Ascending aorta (tissue), 2 donors: ENCODE measurements at regions of chr1 and their contacts with region 1.

Region 1: DNA sequence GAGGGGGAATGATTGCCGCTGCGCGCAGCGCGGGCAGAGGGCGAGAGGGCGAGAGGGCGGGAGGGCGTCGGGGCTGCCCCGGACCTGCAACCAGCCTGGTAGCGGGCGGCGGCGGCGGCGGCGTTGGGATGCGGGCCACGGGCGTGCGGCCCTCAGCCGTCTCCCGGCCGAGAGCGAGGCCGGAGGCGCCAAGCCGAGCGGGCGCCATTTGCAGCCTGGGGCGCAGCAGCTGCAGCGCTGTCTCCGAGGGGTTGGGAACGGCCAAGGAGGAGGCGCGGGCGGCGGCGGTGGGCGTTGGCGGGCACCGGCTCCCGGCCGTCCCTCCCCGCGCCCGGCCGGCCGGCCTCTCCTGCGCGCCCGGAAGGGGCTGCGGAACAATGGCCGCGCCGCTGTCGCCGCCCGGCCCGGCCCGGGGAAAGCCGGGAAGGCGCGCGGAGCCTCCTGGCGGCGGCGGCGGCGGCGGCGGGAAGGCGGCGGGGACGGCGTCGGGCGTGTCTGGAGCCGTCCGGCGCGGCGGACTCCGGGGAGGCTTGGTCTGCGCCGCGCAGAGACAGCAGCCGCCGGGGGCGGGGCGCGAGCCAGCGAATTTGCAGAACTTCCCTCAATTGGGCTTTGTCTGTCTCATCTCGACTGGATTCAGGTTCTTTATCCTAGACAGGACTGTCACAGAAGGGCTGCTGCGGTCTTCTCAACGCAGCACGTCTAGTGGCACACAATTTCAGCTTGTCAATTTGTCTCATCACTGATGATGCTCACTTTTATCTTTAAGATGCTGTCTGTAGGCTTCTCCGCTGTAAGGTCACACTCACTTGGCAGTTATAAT is 35.7 kb downstream of the ZBTB8B start:
- DNase-seq: peak in 1 of 2 donors; percentile 79
- H3K4me3 ChIP-seq: peak overlapping the region; percentile 70 to 94
- H3K27ac ChIP-seq: peak overlapping the region; percentile 90 to 93
- H3K4me1 ChIP-seq: peaks cover 0 to 7% of the 10 kb centered on the region in 2 donors
- H3K27me3 ChIP-seq: no peaks in the 10 kb centered on the region
- CTCF ChIP-seq: peak in 1 of 3 experiments; percentile 59

Region 2: DNA sequence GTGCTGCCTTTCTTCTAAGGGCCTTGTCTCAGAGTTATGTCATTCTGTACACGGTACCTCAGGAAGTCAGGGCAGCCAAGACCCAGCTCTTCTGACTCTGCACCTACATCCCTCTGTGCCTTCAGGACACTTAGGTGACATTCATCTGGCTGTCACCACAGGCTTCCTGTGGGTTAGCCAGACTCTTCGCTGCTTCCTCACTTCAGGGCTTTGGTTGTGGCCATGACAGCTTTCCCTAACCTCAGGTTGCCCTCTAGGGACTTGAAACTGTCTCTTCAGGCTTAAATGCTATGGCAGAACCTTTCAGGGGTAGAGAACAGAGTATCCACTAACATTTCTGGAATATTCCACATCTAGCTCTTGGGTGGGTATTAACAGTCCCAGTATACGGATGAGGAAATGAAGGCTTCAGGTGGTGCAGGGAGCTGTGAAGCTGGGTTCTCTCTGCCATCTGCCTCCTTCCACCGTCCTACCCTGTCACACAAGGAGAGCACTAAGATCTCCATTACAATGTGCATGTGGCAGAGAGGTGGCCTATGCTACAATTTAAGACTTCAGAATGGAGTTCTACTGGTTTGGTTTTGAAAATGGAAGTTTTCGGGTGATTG is 128.3 kb before region 1 on chr1:
- intact Hi-C with region 1: no loop called
- DNase-seq: no peak
- H3K4me3 ChIP-seq: no peak overlapping the region
- H3K27ac ChIP-seq: no peak overlapping the region
- H3K4me1 ChIP-seq: no peaks in the 10 kb centered on the region
- H3K27me3 ChIP-seq: no peaks in the 10 kb centered on the region
- CTCF ChIP-seq: no peak

Region 3: GRCh38 chr1:32538887-32539583 is 38.4 kb after region 1 on chr1 and contains the start of gene ZBTB8A:
- intact Hi-C with region 1: loop called (anchors 2 kb)
- DNase-seq: peak in 1 of 2 donors; percentile 68
- H3K4me3 ChIP-seq: peak within 1 kb of the TSS; percentile 76 to 89
- H3K27ac ChIP-seq: peak within 1 kb of the TSS; percentile 66 to 67
- H3K4me1 ChIP-seq: peaks cover 0 to 7% of the 10 kb centered on the region in 2 donors
- H3K27me3 ChIP-seq: no peaks in the 10 kb centered on the region
- CTCF ChIP-seq: no peak
- total RNA-seq, gene ZBTB8A: 2.2 TPM